Prostate gland (tissue), 2 donors: ENCODE measurements at regions of chr19 and their contacts with region 1.

Region 1: GRCh38 chr19:49148784-49149651 is 6.2 kb downstream of the HRC start:
- DNase-seq: peak; percentile 99
- H3K4me3 ChIP-seq: peak overlapping the region; percentile 73 to 77
- H3K27ac ChIP-seq: peak overlapping the region; percentile 90 to 97
- H3K4me1 ChIP-seq: peaks cover 13% of the 10 kb centered on the region
- H3K27me3 ChIP-seq: no peaks in the 10 kb centered on the region
- CTCF ChIP-seq: peak in 1 of 4 experiments; percentile 29
- POLR2A ChIP-seq: peak; percentile 96

Region 2: DNA sequence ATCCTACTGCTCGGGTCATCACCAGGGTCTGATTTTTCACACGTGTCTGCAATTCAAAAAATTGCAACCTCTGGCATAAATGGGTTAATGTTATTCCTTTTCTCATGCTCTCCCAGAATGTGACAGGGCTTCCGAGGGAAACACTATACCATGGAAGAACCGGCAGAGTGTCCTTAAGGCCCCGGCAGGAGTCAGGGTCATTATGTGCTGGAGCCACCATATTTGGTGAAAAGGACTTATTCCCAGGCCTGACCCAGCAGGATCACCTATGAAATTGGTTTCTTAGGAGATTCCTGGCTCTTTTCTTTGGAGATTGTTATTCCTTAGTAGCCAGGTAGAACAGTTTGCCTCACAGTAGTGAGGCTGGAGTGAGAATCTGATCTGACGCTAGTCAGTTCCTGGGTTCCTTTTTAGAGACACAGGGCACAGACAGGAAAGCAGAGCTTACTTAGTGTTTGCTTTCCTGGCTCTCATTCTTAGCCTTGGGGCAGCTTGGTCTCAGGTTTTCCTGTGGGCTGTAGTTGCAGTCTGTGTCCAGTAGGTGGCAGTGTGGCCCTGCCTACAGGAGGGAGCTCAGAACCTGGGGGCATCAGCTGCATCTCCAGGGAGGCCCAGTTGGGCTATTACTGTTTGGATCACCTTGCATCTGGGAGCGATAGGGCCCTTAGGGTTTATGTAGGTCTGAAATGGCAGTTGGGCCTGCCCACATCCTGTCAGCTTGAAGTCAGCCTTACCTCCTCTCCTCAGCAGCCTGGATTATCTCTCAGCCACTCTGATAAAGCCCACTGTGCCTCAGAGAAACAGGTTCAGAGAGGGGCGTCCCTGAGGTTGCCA is 51.3 kb before region 1 on chr19:
- intact Hi-C with region 1: loop called (anchors 5 kb)
- DNase-seq: peak; percentile 84
- H3K4me3 ChIP-seq: no peak overlapping the region
- H3K27ac ChIP-seq: peak overlapping the region; percentile 67 to 72
- H3K4me1 ChIP-seq: peaks cover 16% of the 10 kb centered on the region
- H3K27me3 ChIP-seq: no peaks in the 10 kb centered on the region
- CTCF ChIP-seq: peak; percentile 97 to 99 (median 98)
- POLR2A ChIP-seq: no peak

Region 3: GRCh38 chr19:49118565-49119410 is 30.2 kb before region 1 on chr19 and contains the start of gene C19orf73:
- intact Hi-C with region 1: loop called (anchors 5 kb)
- DNase-seq: peak; percentile 94
- H3K4me3 ChIP-seq: peak within 1 kb of the TSS; percentile 55 to 58
- H3K27ac ChIP-seq: peak within 1 kb of the TSS; percentile 95 to 97
- H3K4me1 ChIP-seq: peaks cover 14% of the 10 kb centered on the region
- H3K27me3 ChIP-seq: no peaks in the 10 kb centered on the region
- CTCF ChIP-seq: peak in 3 of 4 experiments; percentile 14 to 42 (median 31)
- POLR2A ChIP-seq: peak; percentile 63
- total RNA-seq, gene C19orf73: 2.2 to 11.1 TPM

Region 4: DNA sequence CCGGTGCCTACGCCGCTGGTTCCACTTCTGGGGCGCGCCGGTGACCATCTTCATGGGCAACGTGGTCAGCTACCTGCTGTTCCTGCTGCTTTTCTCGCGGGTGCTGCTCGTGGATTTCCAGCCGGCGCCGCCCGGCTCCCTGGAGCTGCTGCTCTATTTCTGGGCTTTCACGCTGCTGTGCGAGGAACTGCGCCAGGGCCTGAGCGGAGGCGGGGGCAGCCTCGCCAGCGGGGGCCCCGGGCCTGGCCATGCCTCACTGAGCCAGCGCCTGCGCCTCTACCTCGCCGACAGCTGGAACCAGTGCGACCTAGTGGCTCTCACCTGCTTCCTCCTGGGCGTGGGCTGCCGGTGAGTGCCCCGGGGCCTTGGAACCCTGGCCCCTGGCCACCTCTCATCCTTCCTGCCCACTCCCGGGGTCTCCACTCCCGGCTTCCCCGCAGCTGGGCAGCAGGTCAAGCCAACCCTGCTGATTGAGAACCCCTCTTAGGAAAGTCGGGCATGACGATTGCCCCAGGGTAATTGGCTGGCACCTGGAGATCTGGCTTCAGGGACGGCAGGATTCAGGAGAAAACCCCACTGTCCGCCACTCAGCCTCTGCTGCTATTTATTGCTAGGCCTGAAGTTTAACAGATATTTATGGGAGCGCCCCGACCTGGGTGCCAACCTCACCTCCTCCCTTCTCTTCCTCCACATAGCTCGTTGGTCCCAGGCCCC is 47.7 kb after region 1 on chr19:
- intact Hi-C with region 1: loop called (anchors 5 kb)
- DNase-seq: peak; percentile 49
- H3K4me3 ChIP-seq: no peak overlapping the region
- H3K27ac ChIP-seq: peak overlapping the region; percentile 66 to 74
- H3K4me1 ChIP-seq: peaks cover 4% of the 10 kb centered on the region
- H3K27me3 ChIP-seq: no peaks in the 10 kb centered on the region
- CTCF ChIP-seq: no peak
- POLR2A ChIP-seq: no peak

Region 5: GRCh38 chr19:49243129-49243528 is 94.1 kb after region 1 on chr19:
- intact Hi-C with region 1: no loop called
- DNase-seq: no peak
- H3K4me3 ChIP-seq: no peak overlapping the region
- H3K27ac ChIP-seq: no peak overlapping the region
- H3K4me1 ChIP-seq: no peaks in the 10 kb centered on the region
- H3K27me3 ChIP-seq: no peaks in the 10 kb centered on the region
- CTCF ChIP-seq: no peak
- POLR2A ChIP-seq: no peak